ENCODE measurements at regions of chr13 and their contacts with region 1.

Region 1: DNA sequence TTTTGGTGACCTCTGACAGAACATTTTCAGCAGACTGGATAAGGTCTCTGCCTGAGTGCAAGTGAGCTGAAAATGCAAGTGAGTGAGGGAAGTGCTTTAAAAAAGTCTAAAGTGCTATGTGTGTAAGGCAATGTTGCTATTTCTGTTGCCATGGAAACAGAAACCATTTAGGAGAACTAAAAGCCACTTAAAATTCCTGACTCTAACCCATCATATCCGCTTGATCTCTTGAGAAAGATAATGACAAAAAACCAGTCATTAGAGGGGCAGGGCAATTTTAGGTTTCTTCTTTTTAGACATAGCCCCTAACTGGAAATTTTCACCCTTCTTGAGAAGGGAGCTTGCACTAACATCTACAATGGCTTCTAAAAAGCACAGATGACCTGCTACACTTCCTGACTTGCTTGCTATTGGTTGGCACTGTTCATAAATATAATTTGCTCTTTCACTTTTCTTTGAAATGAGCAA is at the start of gene CYSLTR2:
- DNase-seq: peak; percentile 16
- H3K4me3 Mint-ChIP-seq: peak within 1 kb of the TSS; percentile 75
- H3K27ac Mint-ChIP-seq: peak within 1 kb of the TSS; percentile 81
- H3K4me1 Mint-ChIP-seq: peaks cover 33% of the 10 kb centered on the region
- H3K27me3 Mint-ChIP-seq: no peaks in the 10 kb centered on the region
- total RNA-seq, gene CYSLTR2: 2.1 to 2.4 TPM

Region 2: GRCh38 chr13:48346583-48346982 is 306.9 kb before region 1 on chr13:
- CTCF ChIA-PET with region 1: no interaction called
- POLR2A ChIA-PET with region 1: no interaction called
- intact Hi-C with region 1: no loop called
- DNase-seq: no peak
- H3K4me3 Mint-ChIP-seq: no peak overlapping the region
- H3K27ac Mint-ChIP-seq: no peak overlapping the region
- H3K4me1 Mint-ChIP-seq: no peaks in the 10 kb centered on the region
- H3K27me3 Mint-ChIP-seq: no peaks in the 10 kb centered on the region

Region 3: GRCh38 chr13:48749699-48750473 is 96.4 kb after region 1 on chr13:
- CTCF ChIA-PET with region 1: no interaction called
- POLR2A ChIA-PET with region 1: interaction called, 3 read pairs
- intact Hi-C with region 1: loop called (anchors 5 kb)
- DNase-seq: peak; percentile 89
- H3K4me3 Mint-ChIP-seq: peak overlapping the region; percentile 0
- H3K27ac Mint-ChIP-seq: peak overlapping the region; percentile 16
- H3K4me1 Mint-ChIP-seq: peaks cover 19% of the 10 kb centered on the region
- H3K27me3 Mint-ChIP-seq: no peaks in the 10 kb centered on the region

Measured in activated CD4-positive, alpha-beta memory T cell treated with anti-CD3 and anti-CD28 coated beads for 36 hours (primary cell).